Activated CD4-positive, alpha-beta T cell treated with anti-CD3 and anti-CD28 coated beads, Interleukin-2, amount 10 ng/mL, durations not matched to agents 24 days and 14 days (primary cell): ENCODE measurements at regions of chr2 and their contacts with region 1.

Region 1: DNA sequence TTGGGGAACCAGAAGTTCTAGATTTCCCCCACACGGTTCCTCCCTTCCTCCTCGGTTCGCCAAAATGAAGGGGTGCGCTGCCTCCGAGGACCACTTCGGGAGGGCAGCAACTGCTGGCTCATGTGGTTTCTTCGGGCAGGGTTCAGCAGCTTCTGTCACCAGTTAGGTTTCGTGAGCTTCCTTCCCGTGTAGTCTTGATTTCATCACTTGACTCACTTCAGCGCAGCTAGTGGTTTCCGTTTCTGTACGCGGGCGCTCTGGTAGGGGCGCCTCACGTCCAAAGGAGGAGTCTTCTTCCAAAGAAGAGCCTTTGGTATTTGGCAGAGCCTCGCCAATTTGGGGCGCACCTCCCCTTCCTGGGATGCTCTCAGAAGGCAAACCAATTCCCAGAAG is 485 bp upstream of the GALNT3 start:
- DNase-seq: peak; percentile 92
- H3K4me3 Mint-ChIP-seq: peak overlapping the region; percentile 83
- H3K27ac Mint-ChIP-seq: peak overlapping the region; percentile 94
- H3K4me1 Mint-ChIP-seq: peaks cover 38% of the 10 kb centered on the region
- H3K27me3 Mint-ChIP-seq: peaks cover 5% of the 10 kb centered on the region

Region 2: GRCh38 chr2:164126960-164127637 is 1667.4 kb before region 1 on chr2:
- intact Hi-C with region 1: no loop called
- DNase-seq: no peak
- H3K4me3 Mint-ChIP-seq: no peak overlapping the region
- H3K27ac Mint-ChIP-seq: no peak overlapping the region
- H3K4me1 Mint-ChIP-seq: no peaks in the 10 kb centered on the region
- H3K27me3 Mint-ChIP-seq: no peaks in the 10 kb centered on the region

Region 3: DNA sequence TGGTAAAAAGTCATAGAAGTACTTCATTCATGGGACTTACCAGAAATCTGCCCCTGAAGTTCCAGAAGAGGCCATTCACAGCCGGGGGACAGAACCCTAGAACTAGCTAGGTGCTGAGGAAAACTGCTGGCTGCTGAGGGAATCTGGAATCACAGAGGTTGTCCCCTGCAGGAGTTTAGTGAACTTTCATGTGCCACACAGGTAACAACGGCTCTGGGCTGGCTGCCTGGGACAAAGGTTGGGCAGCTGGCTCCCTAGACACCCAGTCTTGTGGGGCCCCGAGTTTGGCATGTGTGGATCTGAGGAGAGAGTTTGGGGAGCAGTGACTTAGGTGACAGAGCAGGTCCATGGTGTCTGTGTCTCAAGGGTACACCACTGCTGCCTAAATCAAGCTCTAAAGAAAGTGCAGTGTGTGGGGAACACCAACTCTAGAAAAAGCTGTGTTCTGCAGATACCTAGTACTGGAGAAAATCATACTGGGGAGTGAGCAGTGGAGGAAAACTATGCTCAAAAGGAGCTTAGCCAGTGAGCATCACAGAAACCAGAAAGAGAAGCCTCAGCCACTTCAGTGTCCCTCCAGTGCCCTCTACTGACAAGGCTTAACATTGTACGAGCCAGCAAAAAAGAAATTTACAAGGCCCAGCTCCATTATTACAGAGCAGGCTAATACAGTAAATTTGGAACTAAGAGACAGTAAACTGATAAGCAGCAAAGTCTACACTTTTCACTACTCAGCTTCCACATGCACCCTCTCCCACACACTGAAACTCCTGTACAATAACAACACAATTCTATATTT is 15.7 kb before region 1 on chr2:
- intact Hi-C with region 1: loop called (anchors 2 kb)
- DNase-seq: peak; percentile 65
- H3K4me3 Mint-ChIP-seq: no peak overlapping the region
- H3K27ac Mint-ChIP-seq: no peak overlapping the region
- H3K4me1 Mint-ChIP-seq: peaks cover 15% of the 10 kb centered on the region
- H3K27me3 Mint-ChIP-seq: no peaks in the 10 kb centered on the region

Region 4: GRCh38 chr2:165833158-165833557 is 38.6 kb after region 1 on chr2:
- intact Hi-C with region 1: no loop called
- DNase-seq: no peak
- H3K4me3 Mint-ChIP-seq: no peak overlapping the region
- H3K27ac Mint-ChIP-seq: no peak overlapping the region
- H3K4me1 Mint-ChIP-seq: no peaks in the 10 kb centered on the region
- H3K27me3 Mint-ChIP-seq: peaks cover 3% of the 10 kb centered on the region

Region 5: GRCh38 chr2:165953655-165954606 is 159.4 kb after region 1 on chr2 and contains the start of gene TTC21B:
- intact Hi-C with region 1: loop called (anchors 2 kb)
- DNase-seq: peak; percentile 98
- H3K4me3 Mint-ChIP-seq: peak within 1 kb of the TSS; percentile 50
- H3K27ac Mint-ChIP-seq: no peak within 1 kb of the TSS
- H3K4me1 Mint-ChIP-seq: peaks cover 5% of the 10 kb centered on the region
- H3K27me3 Mint-ChIP-seq: no peaks in the 10 kb centered on the region
- total RNA-seq, gene TTC21B: 21.4 and 22.7 TPM in 2 replicates